Dendritic cell treated with granulocyte-macrophage colony-stimulating factor and Interleukin-4, amounts not matched to agents 40 ng/mL and 50 ng/mL, for 4 days (primary cell): ENCODE measurements at regions of chr11 and their contacts with region 1.

Region 1: DNA sequence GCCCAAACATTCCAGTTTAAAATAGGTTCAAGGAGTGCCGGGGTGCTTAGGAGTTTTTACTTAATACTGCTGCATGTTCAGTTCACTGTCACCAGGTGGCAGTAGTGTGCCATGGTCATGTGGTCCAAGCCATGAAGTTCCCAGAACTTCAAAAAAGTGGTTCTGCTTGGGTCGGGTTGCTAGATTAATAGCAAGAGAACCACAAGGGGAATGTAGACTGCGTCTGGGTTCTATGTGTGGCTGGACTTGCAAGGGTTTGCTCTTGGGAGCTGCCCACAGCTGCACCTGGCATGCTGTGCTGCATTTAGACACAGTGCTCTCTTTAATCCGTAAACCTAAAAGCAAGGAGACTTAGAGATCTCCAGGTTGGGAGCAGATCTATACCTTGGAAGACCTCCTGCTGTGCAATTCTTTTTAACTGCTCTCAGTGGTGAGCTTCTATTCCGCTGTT is 6.5 kb upstream of the SPON1 start:
- H3K4me3 Mint-ChIP-seq: no peak overlapping the region
- H3K27ac Mint-ChIP-seq: no peak overlapping the region
- H3K4me1 Mint-ChIP-seq: no peaks in the 10 kb centered on the region
- H3K27me3 Mint-ChIP-seq: peaks cover 23% of the 10 kb centered on the region

Region 2: DNA sequence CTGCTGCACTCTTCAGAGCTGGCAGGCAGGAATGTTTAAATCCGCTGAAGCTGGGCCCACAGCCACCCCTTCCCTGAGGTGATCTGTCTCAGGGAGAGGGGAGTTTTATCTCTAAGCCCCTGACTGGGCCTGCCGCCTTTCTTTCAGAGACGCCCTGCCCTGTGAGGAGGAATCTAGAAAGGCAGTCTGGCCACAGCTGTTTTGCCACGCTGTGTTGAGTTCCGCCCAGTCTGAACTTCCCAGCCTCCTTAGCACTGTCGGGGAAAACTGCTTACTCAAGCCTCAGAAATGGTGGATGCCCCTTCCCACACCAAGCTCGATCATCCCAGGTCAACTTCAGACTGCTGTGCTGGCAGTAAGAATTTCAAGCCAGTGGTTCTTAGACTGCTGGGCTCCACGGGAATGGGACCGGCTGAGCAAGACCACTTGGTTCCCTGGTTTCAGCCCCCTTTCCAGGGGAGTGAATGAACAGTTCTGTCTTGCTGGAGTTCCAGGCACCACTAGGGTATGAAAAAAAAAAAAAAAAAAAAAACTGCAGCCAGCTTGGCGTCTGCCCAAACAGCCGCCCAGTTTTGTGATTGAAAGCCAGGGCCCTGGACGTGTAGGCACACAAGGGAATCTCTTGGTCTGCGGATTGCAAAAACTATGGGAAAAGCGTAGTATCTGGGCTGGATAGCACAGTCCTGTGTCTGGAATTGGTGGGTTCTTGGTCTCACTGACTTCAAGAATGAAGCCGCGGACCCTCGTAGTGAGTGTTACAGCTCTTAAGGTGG is 133.9 kb after region 1 on chr11:
- intact Hi-C with region 1: no loop called
- H3K4me3 Mint-ChIP-seq: no peak overlapping the region
- H3K27ac Mint-ChIP-seq: no peak overlapping the region
- H3K4me1 Mint-ChIP-seq: no peaks in the 10 kb centered on the region
- H3K27me3 Mint-ChIP-seq: peaks cover 4% of the 10 kb centered on the region

Region 3: DNA sequence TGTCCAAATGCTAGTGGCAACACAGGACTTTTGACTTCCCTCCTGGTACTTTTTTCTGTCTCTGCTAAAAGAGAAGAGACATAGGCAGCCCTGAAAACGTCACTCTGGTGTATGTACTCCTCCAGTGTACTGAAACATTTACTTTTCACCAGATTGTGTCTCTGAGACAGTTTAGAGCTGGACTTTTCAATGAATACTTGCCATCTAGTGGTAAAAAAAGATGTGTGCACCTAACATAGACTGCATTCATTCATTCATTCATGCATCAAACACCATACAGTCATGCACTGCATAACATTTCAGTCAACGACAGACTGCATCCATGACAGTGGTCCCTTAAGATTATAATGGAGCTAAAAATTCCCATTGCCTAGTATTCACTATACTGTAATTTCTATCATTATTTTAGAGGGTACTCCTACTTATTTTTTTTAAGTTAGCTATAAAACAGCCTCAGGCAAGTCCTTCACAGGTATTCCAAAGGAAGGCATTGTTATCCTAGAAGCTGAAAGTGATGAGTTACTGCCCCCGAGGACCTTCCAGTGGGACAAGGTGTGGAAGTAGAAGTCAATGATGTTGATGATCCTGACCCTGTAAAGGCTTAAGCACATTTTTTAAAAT is 192.8 kb after region 1 on chr11:
- intact Hi-C with region 1: loop called (anchors 2 kb)
- H3K4me3 Mint-ChIP-seq: no peak overlapping the region
- H3K27ac Mint-ChIP-seq: no peak overlapping the region
- H3K4me1 Mint-ChIP-seq: no peaks in the 10 kb centered on the region
- H3K27me3 Mint-ChIP-seq: no peaks in the 10 kb centered on the region

Region 4: DNA sequence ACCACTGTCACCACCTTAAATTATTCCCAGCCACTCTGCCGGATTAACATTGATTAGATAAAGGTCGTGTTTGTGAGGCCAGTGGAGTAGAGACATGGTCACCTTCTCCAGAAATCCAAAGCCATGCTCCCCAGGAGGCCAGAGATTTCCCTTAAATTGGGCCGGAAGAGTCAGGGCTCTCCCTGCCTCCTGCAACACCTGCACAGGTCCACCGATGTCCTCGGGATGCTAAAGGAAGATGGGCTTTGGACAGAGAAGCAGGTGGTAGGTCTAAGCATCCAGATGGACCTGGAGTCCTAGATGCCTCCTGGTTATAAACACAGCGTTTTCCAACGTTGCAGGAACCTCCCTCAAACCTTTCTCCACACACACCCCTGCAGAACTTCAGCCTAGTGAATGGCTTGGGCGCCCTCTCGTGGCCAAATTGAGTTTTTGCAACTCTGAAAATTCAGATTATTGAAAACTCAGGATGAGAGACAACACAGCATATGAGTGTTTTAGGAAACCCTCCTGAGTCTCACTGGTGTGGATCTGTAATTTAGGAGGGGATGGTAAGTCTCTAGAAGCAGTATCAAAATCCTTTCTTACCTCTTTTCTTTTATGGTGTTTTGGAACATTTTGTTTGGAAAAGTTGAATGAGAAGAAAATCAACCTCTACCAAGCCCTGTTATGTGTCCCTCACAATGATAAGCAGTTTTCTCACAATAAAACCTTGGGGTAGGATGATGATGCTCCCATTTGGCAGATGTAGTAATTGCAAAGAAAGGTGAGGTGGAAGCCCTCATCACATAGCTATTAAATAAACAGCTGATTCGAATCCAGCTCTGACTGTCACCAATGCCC is 293.3 kb after region 1 on chr11:
- intact Hi-C with region 1: loop called (anchors 1 kb)
- H3K4me3 Mint-ChIP-seq: no peak overlapping the region
- H3K27ac Mint-ChIP-seq: no peak overlapping the region
- H3K4me1 Mint-ChIP-seq: no peaks in the 10 kb centered on the region
- H3K27me3 Mint-ChIP-seq: peaks cover 31% of the 10 kb centered on the region